ENCODE measurements at regions of chr1 and their contacts with region 1.

Region 1: GRCh38 chr1:241413386-241413785 is 56.4 kb upstream of the RGS7 start:
- DNase-seq: no peak
- H3K4me3 ChIP-seq: no peak overlapping the region
- H3K27ac ChIP-seq: no peak overlapping the region
- H3K4me1 ChIP-seq: no peaks in the 10 kb centered on the region
- H3K27me3 ChIP-seq: no peaks in the 10 kb centered on the region
- CTCF ChIP-seq: no peak

Region 2: GRCh38 chr1:239448911-239449310 is 1964.5 kb before region 1 on chr1:
- intact Hi-C with region 1: loop called (anchors 5 kb)
- DNase-seq: no peak
- H3K4me3 ChIP-seq: no peak overlapping the region
- H3K27ac ChIP-seq: no peak overlapping the region
- H3K4me1 ChIP-seq: no peaks in the 10 kb centered on the region
- H3K27me3 ChIP-seq: no peaks in the 10 kb centered on the region
- CTCF ChIP-seq: no peak

Region 3: DNA sequence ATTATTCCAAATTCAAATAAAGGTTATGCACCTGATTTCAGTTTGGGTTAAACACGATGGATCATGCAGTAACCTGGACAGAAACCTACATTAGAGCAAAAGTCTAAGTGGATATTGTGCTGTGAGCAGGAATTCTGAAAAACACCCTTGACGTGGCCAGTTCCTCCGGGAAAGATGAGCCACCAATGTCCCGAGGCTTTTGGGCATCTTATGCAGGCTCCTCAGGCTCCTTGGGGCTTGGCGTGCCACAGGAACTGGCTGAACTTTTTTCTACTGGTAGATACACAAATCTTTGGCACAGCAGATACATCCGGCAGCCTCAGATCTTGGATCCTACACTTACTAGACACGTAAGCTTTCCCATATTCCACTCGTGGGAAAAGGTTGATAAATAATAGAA is 153.3 kb after region 1 on chr1:
- intact Hi-C with region 1: no loop called
- DNase-seq: no peak
- H3K4me3 ChIP-seq: no peak overlapping the region
- H3K27ac ChIP-seq: no peak overlapping the region
- H3K4me1 ChIP-seq: no peaks in the 10 kb centered on the region
- H3K27me3 ChIP-seq: no peaks in the 10 kb centered on the region
- CTCF ChIP-seq: no peak

Region 4: DNA sequence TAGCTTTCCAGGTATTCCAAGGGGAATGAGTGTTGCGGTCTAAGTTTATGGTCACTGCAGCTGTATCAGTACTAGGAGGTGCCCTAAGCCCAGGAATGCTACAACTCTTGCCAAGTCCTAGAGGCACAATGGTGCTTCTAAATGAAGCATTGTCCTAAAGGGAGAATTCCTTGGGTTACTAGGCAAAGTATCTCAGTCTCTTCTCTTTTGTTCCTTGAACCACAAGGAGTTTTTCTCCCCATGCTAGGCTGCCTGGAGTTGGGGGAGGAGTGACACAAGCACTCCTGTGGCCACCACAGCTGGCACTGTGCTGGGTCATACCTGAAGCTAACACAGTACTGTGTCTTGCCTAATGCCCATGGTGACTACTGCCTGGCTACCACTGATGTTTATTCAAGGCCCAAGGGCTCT is 169.5 kb after region 1 on chr1:
- intact Hi-C with region 1: no loop called
- DNase-seq: no peak
- H3K4me3 ChIP-seq: no peak overlapping the region
- H3K27ac ChIP-seq: no peak overlapping the region
- H3K4me1 ChIP-seq: no peaks in the 10 kb centered on the region
- H3K27me3 ChIP-seq: no peaks in the 10 kb centered on the region
- CTCF ChIP-seq: no peak